Posterior vena cava (tissue), 2 donors: ENCODE measurements at regions of chr9 and their contacts with region 1.

Region 1: GRCh38 chr9:18362901-18363685 is 110.9 kb upstream of the ADAMTSL1 start:
- DNase-seq: no peak

Region 2: DNA sequence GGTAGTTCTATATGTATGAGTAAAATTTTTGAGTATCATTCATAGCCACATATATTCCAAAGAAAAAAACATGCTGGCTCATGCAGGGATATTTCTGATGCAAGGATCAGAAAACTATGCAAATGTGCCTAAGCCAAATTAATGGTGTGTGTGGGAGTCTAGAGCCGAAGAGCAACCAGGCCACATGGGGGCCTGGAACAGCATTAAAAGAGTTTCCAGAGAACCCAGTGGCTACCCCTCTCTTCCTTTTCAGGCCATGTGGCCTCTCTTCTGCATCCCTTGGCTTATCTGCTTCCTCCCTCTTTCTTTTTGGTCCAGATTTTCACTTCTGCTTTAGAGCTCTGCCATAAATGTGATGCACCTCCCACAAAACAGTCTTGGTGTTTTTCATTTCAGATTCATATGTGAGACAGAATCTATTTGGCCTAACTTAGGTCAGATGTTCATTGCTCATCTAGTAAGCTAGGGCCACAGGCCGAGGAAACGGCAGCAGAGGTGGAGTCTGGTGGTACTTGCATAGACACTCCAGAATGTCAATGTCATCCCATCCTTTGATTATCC is 484.2 kb before region 1 on chr9:
- intact Hi-C with region 1: loop called in 1 of 2 experiments (anchors 10 kb)
- DNase-seq: no peak

Region 3: GRCh38 chr9:18173923-18174322 is 189.2 kb before region 1 on chr9:
- intact Hi-C with region 1: no loop called
- DNase-seq: no peak

Region 4: GRCh38 chr9:18297550-18297908 is 65.6 kb before region 1 on chr9:
- intact Hi-C with region 1: loop called in 1 of 2 experiments (anchors 10 kb)
- DNase-seq: no peak

Region 5: DNA sequence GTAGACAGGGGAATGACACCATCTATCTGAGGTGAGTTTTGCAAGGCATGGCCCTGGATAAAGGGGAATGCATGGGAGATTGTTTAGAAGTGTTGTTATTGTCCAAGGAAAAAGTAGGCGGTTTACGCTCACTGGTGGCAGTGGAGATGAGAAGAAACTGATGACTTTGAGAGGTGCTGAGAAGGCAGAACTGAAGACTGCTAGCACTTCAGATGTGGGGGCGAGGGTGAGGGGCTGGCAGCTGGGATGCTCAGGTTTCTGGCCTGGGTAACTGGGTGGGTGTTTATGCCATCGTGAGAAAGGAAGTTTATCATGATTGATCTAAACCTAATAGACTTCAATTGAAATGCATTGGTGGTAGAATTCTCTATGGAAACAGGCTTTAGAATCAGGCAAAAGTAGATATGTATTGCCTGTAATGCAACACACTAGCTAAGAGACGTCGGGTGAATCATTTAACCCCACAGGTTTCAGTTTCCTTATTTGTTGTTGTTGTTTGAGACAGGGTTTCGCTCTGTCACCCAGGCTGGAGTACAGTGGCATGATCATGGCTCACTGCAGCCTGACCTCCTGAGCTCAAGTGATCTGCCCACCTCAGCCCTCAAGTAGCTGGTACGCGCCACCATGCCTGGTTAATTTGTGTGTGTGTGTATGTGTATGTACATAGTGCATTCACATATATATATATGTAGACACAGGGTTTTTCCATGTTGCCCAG is 1302.2 kb after region 1 on chr9:
- intact Hi-C with region 1: loop called in 1 of 2 experiments (anchors 5 kb)
- DNase-seq: no peak